GM10248 (cell line): ENCODE measurements at regions of chr13 and their contacts with region 1.

Region 1: GRCh38 chr13:27425917-27426630 is 1.7 kb downstream of the GTF3A start:
- DNase-seq: peak; percentile 50
- CTCF ChIP-seq: peak; percentile 27

Region 2: DNA sequence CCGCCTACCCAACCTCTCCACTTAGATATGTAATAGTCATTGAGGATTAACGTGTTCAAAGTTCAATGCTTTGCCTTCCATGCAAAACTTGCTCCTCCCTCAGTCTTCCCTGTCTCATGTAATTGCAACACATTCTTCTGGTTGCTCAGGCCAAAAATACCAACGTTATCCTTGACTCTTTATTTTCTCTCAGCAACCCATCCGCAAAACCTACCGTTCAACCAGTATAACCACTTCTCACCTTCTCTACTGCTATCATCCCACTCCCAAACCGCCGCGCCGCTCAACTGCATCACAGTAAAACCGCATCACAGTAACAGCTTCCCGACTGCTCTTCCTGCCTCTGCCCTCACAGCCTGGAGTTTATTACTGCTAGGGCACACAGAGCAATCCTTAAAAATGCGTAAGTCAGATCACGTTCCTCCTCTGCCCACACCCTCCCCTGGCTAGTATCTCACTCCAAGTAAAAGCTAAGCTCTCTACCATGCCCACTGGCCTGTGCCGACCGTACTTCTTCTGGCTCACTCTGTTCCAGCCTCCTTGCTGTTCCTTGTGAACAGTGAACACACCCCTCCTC is 16.1 kb after region 1 on chr13:
- CTCF ChIA-PET with region 1: interaction called, 25 read pairs
- POLR2A ChIA-PET with region 1: no interaction called
- DNase-seq: no peak
- CTCF ChIP-seq: no peak